ENCODE measurements at regions of chr15 and their contacts with region 1.

Region 1: DNA sequence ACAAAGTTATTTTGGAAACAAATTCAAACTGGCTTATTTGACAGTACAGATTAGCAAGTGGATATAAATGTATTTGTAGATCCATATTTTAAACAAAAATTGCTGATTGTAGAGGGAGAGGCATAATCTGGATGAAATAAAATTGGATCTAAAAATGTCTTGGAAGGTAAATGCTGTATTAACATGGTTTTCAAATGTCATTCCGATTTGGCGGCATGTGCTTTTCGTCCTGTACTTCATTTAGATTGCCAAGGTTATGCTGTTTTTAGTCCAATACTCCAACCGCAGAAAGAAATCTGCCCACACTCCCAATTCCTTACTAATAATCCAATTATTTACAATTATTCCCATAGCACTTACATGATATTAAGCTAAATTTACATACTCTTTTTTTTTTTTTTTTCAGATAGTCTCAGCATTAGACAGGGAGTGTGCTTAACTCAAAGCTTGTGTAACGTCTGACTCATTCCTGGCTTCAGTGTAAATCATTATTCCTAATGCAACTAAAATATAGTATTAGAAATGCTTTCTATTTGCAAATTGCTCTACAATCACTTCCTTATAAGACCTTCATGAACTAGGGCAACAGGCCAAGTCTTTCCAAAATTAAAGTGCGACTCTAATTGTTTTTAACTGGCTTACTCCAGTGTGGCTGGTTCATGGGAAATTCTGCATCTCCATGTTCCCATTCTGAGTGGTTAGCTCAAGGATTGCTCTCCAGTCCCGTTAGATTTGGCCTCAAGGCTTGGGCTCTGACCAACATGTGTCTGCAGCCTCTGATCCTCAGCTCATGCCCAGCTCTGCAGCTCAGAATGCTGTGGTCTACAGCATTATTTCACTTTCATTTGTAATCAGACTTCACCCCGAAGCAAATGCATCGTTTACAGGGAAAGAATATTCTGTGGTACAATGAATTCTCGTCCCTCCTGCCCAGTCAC is 103.9 kb downstream of the FBN1 start:
- DNase-seq: no peak

Region 2: GRCh38 chr15:48631176-48631770 is 89.7 kb after region 1 on chr15:
- intact Hi-C with region 1: loop called (anchors 10 kb)
- DNase-seq: peak in 1 of 10 donors; percentile 67